ENCODE measurements at regions of chr3 and their contacts with region 1.

Region 1: DNA sequence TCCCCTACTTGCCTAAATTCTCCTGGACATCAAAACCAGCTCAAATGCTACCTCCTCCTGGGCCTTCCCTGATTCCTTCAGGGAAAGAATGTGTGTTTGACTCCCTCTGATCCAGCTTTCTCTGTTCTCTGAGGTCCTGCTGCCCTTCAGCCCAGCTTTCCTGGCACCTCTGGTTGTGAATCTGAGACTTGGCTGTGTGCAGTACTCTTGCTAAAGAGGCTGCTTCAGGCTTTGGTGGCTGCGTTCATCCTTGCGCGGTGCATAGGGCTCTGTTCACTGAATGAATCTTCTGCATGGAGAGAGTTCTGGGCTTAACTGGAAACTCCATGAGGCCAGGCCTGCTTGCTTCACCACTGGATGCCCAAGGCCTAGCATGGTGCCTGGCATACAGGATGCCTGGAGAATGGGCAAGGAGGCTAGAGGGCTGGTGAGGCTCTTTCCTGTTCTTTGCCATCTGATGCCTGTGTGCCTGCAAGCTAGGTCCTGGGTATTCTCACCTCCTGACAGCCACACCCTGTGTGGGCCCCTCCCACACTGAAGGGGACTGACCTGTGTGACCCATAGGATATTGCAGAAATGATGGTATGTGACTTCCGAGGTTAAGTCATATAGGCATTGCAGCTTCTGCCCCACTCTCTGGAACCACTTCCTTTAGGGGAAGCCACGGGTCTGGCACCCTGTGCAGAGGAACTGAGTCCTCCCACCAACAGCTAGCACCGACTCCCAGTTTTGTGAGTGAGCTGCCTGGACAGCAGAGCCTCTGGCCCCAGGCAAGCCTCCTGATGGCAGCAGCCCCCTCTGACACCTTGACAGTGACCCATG is 24.8 kb upstream of the SLC6A6 start:
- DNase-seq: peak; percentile 53 to 71
- ATAC-seq: peak; percentile 91 to 97 (median 96)
- H3K4me3 ChIP-seq: no peak overlapping the region
- H3K4me3 Mint-ChIP-seq: peak overlapping the region; percentile 72
- H3K27ac ChIP-seq: no peak overlapping the region
- H3K27ac Mint-ChIP-seq: peak overlapping the region; percentile 81
- H3K4me1 ChIP-seq: peaks cover 34% of the 10 kb centered on the region
- H3K4me1 Mint-ChIP-seq: peaks cover 23 to 40% of the 10 kb centered on the region in 2 donors
- H3K27me3 ChIP-seq: peaks cover 2% of the 10 kb centered on the region
- H3K27me3 Mint-ChIP-seq: peaks cover 24 to 26% of the 10 kb centered on the region in 2 donors
- CTCF ChIP-seq: no peak

Region 2: DNA sequence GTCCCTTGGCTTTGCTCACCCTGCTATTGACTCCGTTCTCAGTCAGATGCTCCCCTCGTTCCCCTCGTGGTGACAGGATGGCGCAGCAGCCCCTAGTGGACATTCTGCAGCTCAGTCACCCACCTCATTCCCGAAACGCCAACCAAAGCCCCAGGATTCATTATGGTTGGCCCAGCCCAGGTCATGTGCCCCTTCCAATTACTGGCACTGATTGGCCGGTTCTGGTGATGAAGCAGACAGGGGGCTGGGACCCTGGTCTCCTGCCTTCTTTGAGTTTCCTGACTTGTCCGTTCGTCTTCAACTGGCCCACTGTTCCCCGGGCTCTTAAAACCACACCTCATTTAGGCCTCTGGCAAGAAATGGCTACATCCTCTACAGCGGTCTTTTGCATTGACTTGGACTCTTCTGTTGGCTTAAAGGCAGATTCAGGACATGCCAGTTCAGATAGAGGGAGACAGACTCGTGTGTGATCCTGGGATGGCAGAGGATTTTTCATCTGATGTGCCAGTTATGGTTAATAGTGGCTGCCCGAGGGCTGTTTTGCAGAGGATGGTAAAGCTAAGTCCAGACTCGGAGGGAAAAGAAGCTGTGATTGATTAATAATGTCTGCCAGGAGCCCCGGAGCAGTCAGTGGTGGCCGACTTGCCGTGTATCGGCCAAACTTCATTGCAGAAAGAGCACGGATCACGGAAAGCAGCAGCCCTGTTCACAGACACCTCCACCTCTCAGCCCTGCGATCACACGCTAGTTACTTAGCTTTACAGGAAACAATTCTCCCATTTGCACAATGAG is 161.1 kb before region 1 on chr3:
- intact Hi-C with region 1: no loop called
- DNase-seq: peak; percentile 47 to 65
- ATAC-seq: peak in 2 of 3 donors; percentile 67 to 96
- H3K4me3 ChIP-seq: no peak overlapping the region
- H3K4me3 Mint-ChIP-seq: peak overlapping the region; percentile 49
- H3K27ac ChIP-seq: no peak overlapping the region
- H3K27ac Mint-ChIP-seq: peak overlapping the region in 1 of 2 donors; percentile 88
- H3K4me1 ChIP-seq: no peaks in the 10 kb centered on the region
- H3K4me1 Mint-ChIP-seq: peaks cover 0 to 15% of the 10 kb centered on the region in 2 donors
- H3K27me3 ChIP-seq: no peaks in the 10 kb centered on the region
- H3K27me3 Mint-ChIP-seq: peaks cover 8 to 9% of the 10 kb centered on the region in 2 donors
- CTCF ChIP-seq: peak; percentile 61

Region 3: DNA sequence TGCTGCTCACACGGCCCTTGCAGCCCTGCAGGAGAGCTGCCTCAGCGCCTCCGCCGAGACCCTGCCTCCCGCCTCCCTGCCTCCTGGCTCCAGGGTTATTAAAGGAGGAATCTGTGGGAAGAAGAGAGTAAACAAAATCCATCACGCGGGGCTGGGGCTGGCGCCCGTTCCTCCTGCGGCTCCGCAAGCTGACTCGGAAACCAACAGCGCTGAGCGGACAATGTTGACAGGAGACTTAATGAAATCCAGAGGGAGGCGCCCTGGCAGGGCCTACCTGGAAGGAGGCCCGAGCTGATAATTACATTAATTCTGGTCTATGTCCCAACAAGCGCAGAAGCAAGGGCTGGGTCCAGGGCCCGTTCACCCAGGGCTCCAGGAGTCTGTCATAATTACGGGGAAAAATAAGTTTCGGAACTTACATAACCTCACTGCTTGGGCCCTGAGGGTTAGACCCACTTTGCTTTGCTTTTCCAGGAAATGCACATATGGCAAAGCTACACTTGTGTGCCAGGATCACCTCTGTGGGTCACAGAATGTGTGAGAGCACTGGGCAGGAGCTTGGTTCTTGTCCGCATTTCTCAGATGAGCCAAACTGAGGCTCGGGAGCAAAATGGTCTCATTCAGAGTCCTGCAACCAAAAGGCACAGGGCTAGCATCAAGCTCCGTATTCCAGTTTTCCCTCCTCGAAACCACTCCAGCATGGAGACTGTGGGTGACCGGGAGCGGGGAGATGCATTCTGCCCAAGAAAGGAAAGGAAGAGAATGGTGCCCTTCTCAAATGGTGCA is 18.9 kb before region 1 on chr3:
- intact Hi-C with region 1: no loop called
- DNase-seq: no peak
- ATAC-seq: no peak
- H3K4me3 ChIP-seq: no peak overlapping the region
- H3K4me3 Mint-ChIP-seq: no peak overlapping the region
- H3K27ac ChIP-seq: no peak overlapping the region
- H3K27ac Mint-ChIP-seq: no peak overlapping the region
- H3K4me1 ChIP-seq: no peaks in the 10 kb centered on the region
- H3K4me1 Mint-ChIP-seq: no peaks in the 10 kb centered on the region
- H3K27me3 ChIP-seq: no peaks in the 10 kb centered on the region
- H3K27me3 Mint-ChIP-seq: peaks cover 0 to 7% of the 10 kb centered on the region in 2 donors
- CTCF ChIP-seq: no peak

Region 4: DNA sequence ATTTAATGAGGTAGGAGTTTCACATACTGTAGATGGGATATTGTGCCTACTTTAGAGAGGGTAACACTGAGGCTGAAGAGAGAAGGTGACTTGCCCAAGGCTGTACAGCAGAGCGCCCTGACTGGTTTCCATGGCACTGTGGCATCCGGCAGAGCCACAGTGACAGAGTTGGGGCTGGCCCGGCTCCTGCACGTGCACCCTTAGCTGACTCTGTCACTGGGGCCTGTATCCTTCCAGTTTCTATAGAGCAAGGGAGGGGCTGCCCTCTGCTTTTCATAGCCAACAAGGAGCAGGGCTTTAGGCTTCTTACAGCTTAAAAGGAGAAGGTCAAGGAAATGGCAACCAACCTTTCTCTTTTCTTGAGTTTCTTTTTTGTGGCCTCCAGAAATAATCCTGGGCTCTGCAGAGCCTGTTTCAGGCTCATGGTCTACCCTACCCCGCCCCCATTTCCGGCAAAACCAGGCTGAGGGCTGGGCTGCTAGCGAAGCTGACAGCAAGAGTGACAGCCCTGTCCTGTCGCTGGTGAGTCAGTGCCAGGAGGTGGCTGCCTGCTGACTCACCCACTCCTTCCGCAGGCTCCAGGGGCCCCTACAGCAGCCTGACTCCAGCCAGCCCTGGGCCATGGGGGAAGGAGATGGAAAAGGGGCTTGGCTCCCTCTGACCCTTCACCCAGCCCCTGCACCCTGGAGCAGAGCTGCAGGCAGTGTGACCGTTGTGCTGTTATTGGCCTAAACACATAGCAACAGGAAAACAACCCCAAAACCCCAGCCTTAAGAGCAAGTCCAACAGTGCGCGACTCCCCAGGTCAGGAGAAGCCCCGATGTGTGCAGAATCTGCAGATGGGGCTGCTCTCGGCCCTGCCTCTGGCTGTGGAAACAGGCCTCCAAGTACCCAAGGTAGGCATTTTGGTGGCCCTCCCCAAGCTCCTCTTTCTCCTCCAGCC is 54.6 kb after region 1 on chr3:
- intact Hi-C with region 1: loop called (anchors 2 kb)
- DNase-seq: peak; percentile 91 to 96
- ATAC-seq: peak; percentile 75 to 93 (median 85)
- H3K4me3 ChIP-seq: peak overlapping the region; percentile 15
- H3K4me3 Mint-ChIP-seq: peak overlapping the region; percentile 73
- H3K27ac ChIP-seq: peak overlapping the region; percentile 97
- H3K27ac Mint-ChIP-seq: peak overlapping the region; percentile 96 to 97
- H3K4me1 ChIP-seq: peaks cover 96% of the 10 kb centered on the region
- H3K4me1 Mint-ChIP-seq: peaks cover 76 to 85% of the 10 kb centered on the region in 2 donors
- H3K27me3 ChIP-seq: no peaks in the 10 kb centered on the region
- H3K27me3 Mint-ChIP-seq: no peaks in the 10 kb centered on the region
- CTCF ChIP-seq: no peak